Activated CD4-positive, alpha-beta T cell treated with anti-CD3 and anti-CD28 coated beads, Interleukin-2, amount 10 ng/mL, durations not matched to agents 24 days and 14 days (primary cell): ENCODE measurements at regions of chr6 and their contacts with region 1.

Region 1: GRCh38 chr6:6547110-6547879 is 41.2 kb upstream of the LY86 start:
- DNase-seq: peak; percentile 95
- H3K4me3 Mint-ChIP-seq: peak overlapping the region; percentile 75
- H3K27ac Mint-ChIP-seq: peak overlapping the region; percentile 7
- H3K4me1 Mint-ChIP-seq: peaks cover 11% of the 10 kb centered on the region
- H3K27me3 Mint-ChIP-seq: peaks cover 68% of the 10 kb centered on the region

Region 2: GRCh38 chr6:5995949-5996713 is 551.2 kb before region 1 on chr6:
- intact Hi-C with region 1: no loop called
- DNase-seq: peak; percentile 72
- H3K4me3 Mint-ChIP-seq: peak overlapping the region; percentile 88
- H3K27ac Mint-ChIP-seq: peak overlapping the region; percentile 45
- H3K4me1 Mint-ChIP-seq: peaks cover 45% of the 10 kb centered on the region
- H3K27me3 Mint-ChIP-seq: peaks cover 85% of the 10 kb centered on the region

Region 3: DNA sequence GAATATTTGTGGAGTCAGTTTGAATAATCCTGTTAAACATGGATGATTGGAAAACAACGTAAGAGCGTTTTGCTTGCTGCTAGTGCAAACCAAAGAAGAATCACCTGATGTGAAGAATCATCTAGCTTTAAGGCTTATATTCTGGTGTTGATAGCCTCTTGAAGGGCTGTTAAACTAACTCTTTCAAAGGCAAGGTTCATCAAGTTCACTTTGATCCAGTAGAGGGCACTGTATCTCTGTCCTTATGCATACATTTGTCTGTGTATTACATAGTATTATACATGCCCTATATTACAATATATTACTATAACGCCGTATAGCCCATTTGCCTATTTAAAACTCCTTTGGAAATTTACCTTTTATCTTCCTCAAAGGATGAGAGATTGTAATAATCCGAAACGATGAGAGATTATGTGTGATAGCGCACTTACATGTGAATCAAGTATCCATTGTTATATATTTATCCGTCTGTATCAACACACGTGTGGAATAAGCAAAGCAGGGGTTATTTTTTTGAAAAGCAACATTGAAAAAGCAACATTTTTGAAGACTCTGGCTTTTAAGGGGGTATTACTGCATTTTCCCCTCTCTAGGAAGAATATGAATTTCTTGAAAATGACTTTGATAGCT is 489.8 kb before region 1 on chr6:
- intact Hi-C with region 1: loop called (anchors 1 kb)
- DNase-seq: peak; percentile 68
- H3K4me3 Mint-ChIP-seq: no peak overlapping the region
- H3K27ac Mint-ChIP-seq: no peak overlapping the region
- H3K4me1 Mint-ChIP-seq: no peaks in the 10 kb centered on the region
- H3K27me3 Mint-ChIP-seq: peaks cover 21% of the 10 kb centered on the region

Region 4: GRCh38 chr6:6131492-6132109 is 415.7 kb before region 1 on chr6:
- intact Hi-C with region 1: loop called (anchors 10 kb)
- DNase-seq: peak; percentile 69
- H3K4me3 Mint-ChIP-seq: no peak overlapping the region
- H3K27ac Mint-ChIP-seq: no peak overlapping the region
- H3K4me1 Mint-ChIP-seq: no peaks in the 10 kb centered on the region
- H3K27me3 Mint-ChIP-seq: no peaks in the 10 kb centered on the region

Region 5: DNA sequence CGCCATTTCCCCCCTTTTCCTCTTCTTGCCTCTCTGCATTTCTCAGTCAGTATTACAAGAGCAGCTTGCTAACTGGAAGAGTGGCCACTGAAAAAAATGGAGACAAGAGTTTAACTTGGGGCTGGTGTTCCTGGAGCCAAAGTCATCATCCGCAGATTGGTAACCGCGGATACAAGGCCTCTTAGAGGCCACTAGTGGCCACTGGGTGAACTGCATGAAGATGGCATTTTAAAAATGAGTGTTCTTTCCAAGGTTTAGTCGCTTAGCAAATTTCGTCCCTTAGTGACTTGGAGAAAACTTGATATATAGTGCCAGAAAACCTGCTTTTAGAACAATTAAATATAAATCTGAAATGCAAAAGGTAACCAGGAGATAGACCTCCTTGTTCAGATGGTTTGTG is 231.6 kb before region 1 on chr6:
- intact Hi-C with region 1: loop called (anchors 10 kb)
- DNase-seq: peak; percentile 75
- H3K4me3 Mint-ChIP-seq: no peak overlapping the region
- H3K27ac Mint-ChIP-seq: no peak overlapping the region
- H3K4me1 Mint-ChIP-seq: no peaks in the 10 kb centered on the region
- H3K27me3 Mint-ChIP-seq: peaks cover 36% of the 10 kb centered on the region